GM12878 (cell line): ENCODE measurements at regions of chr6 and their contacts with region 1.

Region 1: DNA sequence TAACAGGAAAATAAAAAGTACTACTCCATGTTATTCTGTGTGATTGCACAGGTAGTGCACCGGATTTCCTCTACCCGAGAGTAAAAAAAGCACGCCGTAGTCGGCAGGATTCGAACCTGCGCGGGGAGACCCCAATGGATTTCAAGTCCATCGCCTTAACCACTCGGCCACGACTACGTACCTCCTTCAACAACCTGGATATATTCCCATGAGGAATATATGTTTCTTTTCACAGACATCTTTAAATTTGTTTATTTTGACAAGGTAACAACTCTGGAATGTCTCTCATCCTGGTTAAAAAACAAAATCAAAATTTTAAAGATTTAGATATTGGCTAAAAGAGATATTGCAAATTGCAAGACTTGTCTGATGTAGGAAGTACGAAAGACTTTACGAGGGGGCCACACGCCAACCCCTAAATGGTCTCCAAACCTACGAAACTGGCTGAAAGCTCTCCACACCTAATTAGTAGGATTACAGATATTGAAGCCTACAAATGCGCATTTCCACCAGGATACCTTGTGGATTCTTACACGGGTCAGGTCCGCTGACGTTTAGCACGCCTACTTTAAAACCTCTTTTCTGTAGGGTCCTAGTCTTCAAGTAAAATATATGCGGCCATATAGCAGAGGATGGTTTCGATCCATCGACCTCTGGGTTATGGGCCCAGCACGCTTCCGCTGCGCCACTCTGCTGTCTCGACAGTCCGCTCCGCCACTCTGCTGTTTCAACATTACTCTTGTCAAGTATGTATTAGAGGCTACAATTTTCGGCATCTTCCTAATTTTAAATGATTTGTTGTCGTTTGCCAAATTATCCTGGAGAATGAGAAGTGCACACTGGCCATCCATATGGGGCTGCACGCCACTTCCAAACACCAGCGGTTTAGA is 52.3 kb upstream of the BTN3A2 start:
- DNase-seq: no peak
- ATAC-seq: peak; percentile 72
- H3K4me3 ChIP-seq: peak overlapping the region; percentile 80
- H3K27ac ChIP-seq: peak overlapping the region; percentile 66
- H3K4me1 ChIP-seq: peaks cover 14% of the 10 kb centered on the region
- H3K27me3 ChIP-seq: no peaks in the 10 kb centered on the region
- CTCF ChIP-seq: no peak
- EP300 ChIP-seq: peak in 1 of 2 experiments; percentile 61; a peak in 1 of 4 replicates
- POLR2A ChIP-seq: no peak
- RAD21 ChIP-seq: no peak

Region 2: DNA sequence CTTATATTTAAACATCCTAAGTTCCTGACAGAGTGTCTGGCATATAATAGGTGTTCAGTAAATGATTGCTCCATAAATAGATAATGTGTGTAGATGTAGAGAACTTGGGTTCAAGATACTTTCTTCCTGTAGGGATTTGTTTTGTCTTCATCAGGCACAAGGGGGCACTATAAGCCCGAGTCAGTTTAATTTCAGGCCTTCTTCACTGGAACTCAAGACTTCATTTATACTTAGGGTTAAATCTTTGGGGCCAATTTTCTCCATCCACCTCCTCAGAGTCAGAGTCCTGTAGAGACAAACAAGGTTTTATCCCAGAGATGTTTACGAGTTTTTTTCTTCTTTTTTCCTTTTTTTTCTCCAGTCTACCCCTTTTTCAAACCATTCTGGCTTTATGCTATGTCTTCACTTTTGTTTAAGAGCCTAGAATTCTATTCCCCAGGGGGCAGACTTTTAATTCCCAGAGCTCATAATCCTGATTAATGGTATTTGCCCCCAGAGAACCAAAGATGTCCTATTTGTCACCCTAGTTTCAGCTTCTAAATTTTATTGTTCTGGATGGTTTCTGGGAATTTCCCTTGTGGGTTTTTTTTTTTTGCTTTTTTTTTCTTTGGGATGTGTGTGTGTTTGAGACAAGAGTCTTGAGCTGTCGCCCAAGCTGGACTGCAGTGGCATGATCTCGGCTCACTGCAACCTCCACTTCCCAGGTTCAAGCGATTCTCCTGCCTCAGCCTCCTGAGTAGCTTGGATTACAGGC is 137.1 kb before region 1 on chr6:
- CTCF ChIA-PET with region 1: interaction called, 3 read pairs
- POLR2A ChIA-PET with region 1: interaction called, 3 read pairs
- RAD21 ChIA-PET with region 1: no interaction called
- SMC1A ChIA-PET with region 1: interaction called, 3 read pairs
- in situ Hi-C with region 1: no loop called
- intact Hi-C with region 1: loop called (anchors 5 kb)
- DNase-seq: no peak
- ATAC-seq: peak; percentile 28
- H3K4me3 ChIP-seq: peak overlapping the region; percentile 9; the same call in 1 of the 2 replicates
- H3K27ac ChIP-seq: peak overlapping the region; percentile 27
- H3K4me1 ChIP-seq: peaks cover 27% of the 10 kb centered on the region
- H3K27me3 ChIP-seq: no peaks in the 10 kb centered on the region
- CTCF ChIP-seq: peak; percentile 56 to 77 (median 64); a peak in 5 of 6 replicates
- EP300 ChIP-seq: no peak
- POLR2A ChIP-seq: no peak
- RAD21 ChIP-seq: peak; percentile 91

Region 3: DNA sequence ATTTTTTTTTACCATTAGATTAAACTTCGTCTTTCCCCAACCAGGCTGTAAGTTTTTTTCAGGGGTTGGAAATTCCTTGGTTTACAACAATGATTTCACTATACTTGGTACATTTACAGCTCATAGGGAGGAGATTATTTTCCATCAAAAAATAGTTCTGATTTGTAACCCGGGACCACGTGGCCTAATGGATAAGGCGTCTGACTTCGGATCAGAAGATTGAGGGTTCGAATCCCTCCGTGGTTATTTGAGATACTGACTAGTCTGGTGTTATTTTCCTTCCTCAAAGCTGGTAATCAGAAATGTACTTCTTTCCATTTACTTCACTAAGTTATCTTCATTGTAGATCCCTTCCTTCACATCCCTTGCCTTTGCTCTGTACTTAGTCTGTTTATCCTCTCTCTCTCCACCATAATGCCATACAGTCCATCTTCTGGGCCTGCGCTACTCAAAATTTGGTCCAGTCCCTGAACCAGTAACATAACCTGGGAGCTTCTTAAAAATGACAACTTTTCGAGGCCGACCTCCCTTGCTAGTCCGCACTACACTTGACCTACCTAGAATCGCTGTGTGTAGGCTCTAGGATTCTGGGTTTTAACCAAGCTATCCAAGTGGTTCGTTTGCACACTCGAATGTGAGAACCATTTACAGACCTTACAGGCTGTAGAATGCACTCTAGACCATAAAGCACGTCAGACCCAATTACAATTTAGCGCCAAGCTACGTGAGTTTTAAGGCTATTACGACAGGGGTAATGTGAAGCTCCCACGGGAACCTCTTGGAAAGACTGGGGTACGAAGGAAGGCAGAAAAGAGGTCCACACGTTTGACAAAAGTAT is 10.1 kb after region 1 on chr6:
- CTCF ChIA-PET with region 1: interaction called, 20 read pairs
- POLR2A ChIA-PET with region 1: interaction called, 5 read pairs
- RAD21 ChIA-PET with region 1: interaction called, 6 read pairs
- SMC1A ChIA-PET with region 1: interaction called, 22 read pairs
- in situ Hi-C with region 1: no loop called
- intact Hi-C with region 1: loop called (anchors 1 kb)
- DNase-seq: peak; percentile 87
- ATAC-seq: peak; percentile 58
- H3K4me3 ChIP-seq: peak overlapping the region; percentile 69
- H3K27ac ChIP-seq: no peak overlapping the region
- H3K4me1 ChIP-seq: peaks cover 7% of the 10 kb centered on the region
- H3K27me3 ChIP-seq: no peaks in the 10 kb centered on the region
- CTCF ChIP-seq: no peak
- EP300 ChIP-seq: no peak; a peak in 1 of 4 replicates
- POLR2A ChIP-seq: no peak
- RAD21 ChIP-seq: no peak

Region 4: DNA sequence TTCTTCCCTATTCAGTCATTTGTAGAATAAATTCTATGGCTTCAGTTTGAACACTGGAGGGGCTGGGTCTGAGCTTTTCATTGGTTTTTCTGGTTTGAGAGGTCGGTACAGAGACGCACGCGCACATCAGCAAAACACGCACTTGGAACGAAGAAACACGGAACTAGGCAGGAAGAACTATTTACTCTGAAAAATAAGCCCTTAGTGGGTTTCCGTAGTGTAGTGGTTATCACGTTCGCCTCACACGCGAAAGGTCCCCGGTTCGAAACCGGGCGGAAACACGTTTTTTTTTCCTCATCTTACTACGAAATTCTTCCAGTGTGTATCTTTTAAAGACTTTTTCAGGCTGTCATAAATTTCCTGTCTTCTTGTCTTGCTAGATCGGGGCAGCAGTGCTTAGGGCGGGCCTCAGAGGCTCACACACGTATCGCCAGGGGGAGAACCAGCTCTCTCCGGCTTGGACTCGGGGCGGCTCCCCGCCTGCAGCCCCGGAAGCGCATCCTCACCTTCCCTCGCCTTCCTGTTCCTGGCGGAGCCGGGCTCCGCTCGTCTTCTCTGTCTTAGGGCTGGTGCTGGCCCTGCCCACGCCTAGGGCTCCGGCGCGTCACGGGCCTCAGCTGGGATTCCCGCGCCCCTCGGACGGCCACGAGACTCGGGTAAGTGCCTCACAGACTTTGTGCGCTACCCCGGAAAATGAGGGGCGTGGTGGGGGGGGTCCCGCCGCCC is 225.3 kb after region 1 on chr6 and contains the start of gene HMGN4:
- CTCF ChIA-PET with region 1: interaction called, 4 read pairs
- POLR2A ChIA-PET with region 1: no interaction called
- RAD21 ChIA-PET with region 1: interaction called, 9 read pairs
- SMC1A ChIA-PET with region 1: interaction called, 6 read pairs
- in situ Hi-C with region 1: no loop called
- intact Hi-C with region 1: loop called (anchors 2 kb)
- DNase-seq: peak; percentile 96
- ATAC-seq: peak; percentile 81
- H3K4me3 ChIP-seq: peak within 1 kb of the TSS; percentile 86
- H3K27ac ChIP-seq: peak within 1 kb of the TSS; percentile 99
- H3K4me1 ChIP-seq: peaks cover 14% of the 10 kb centered on the region
- H3K27me3 ChIP-seq: no peaks in the 10 kb centered on the region
- CTCF ChIP-seq: 0 out of 6 replicates have a peak, but pooled peaks of 1 of the 3 experiments have one; percentile 8
- EP300 ChIP-seq: peak in 1 of 2 experiments; percentile 74; a peak in 1 of 4 replicates
- POLR2A ChIP-seq: peak; percentile 84
- RAD21 ChIP-seq: no peak
- polyA plus RNA-seq, gene HMGN4: 26.7 to 31.2 TPM

Region 5: DNA sequence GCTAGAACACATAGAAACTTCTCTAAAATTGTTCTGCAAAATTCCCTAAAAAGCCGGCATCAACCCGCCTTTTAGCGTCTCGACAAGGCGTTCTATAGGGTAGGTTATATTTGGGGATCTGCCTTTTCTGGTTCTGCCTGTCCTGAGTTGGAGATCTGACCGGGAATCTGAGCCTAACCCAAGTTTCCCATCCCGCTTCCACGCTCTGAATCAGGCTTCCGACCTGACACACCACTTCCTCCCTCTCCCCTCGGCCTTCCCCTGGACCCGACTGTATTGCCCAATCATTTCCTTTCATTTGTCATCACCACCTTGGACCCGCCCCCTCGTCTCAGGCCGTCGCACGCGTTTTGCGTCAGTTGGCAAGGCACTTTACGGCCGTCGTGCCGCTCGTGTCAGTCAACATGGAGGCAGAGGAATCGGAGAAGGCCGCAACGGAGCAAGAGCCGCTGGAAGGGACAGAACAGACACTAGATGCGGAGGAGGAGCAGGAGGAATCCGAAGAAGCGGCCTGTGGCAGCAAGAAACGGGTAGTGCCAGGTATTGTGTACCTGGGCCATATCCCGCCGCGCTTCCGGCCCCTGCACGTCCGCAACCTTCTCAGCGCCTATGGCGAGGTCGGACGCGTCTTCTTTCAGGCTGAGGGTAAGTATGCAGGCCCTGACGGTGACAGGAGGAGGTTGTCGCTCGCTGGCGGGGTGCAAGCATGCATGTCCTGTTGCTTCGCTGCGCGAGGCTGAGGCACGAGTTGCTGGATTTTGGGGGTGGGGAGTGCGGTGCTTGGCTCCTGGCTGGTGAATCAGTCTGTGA is 284.0 kb after region 1 on chr6 and contains the start of gene ABT1:
- CTCF ChIA-PET with region 1: interaction called, 10 read pairs
- POLR2A ChIA-PET with region 1: no interaction called
- RAD21 ChIA-PET with region 1: no interaction called
- SMC1A ChIA-PET with region 1: interaction called, 3 read pairs
- in situ Hi-C with region 1: no loop called
- intact Hi-C with region 1: no loop called
- DNase-seq: peak; percentile 96
- ATAC-seq: peak; percentile 88
- H3K4me3 ChIP-seq: peak within 1 kb of the TSS; percentile 93
- H3K27ac ChIP-seq: peak within 1 kb of the TSS; percentile 85
- H3K4me1 ChIP-seq: peaks cover 18% of the 10 kb centered on the region
- H3K27me3 ChIP-seq: no peaks in the 10 kb centered on the region
- CTCF ChIP-seq: no peak
- EP300 ChIP-seq: no peak
- POLR2A ChIP-seq: peak; percentile 97
- RAD21 ChIP-seq: no peak
- polyA plus RNA-seq, gene ABT1: 8.4 to 11.3 TPM

Region 6: DNA sequence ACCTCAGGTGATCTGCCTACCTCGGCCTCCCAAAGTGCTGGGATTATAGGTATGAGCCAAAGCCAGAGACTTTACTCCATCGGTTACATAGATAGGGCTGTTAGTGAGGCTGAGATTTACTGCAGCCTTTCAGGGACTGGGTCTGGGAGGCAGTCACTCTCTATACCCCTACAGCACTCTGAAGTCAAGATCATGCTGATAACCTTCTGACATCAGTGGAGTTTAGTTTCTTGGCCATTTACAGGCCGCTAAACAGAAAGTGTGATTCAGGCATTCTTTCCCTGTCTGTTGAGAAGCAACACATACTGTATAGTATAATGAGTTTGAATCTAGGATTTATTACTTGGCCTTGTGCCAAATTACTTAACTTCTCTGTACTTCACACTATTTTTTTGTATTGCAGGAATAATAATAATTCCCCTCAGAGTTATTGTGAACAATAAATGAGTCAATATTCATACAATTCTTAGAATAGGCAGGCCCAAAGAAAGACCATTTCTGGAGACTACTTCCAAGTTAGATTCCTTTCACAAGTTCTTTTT is 1079.8 kb after region 1 on chr6:
- CTCF ChIA-PET with region 1: no interaction called
- POLR2A ChIA-PET with region 1: no interaction called
- RAD21 ChIA-PET with region 1: no interaction called
- SMC1A ChIA-PET with region 1: no interaction called
- in situ Hi-C with region 1: no loop called
- intact Hi-C with region 1: no loop called
- DNase-seq: no peak
- ATAC-seq: no peak
- H3K4me3 ChIP-seq: no peak overlapping the region
- H3K27ac ChIP-seq: no peak overlapping the region
- H3K4me1 ChIP-seq: no peaks in the 10 kb centered on the region
- H3K27me3 ChIP-seq: no peaks in the 10 kb centered on the region
- CTCF ChIP-seq: no peak
- EP300 ChIP-seq: no peak
- POLR2A ChIP-seq: no peak
- RAD21 ChIP-seq: no peak